PC-3 (cell line): ENCODE measurements at regions of chr17 and their contacts with region 1.

Region 1: DNA sequence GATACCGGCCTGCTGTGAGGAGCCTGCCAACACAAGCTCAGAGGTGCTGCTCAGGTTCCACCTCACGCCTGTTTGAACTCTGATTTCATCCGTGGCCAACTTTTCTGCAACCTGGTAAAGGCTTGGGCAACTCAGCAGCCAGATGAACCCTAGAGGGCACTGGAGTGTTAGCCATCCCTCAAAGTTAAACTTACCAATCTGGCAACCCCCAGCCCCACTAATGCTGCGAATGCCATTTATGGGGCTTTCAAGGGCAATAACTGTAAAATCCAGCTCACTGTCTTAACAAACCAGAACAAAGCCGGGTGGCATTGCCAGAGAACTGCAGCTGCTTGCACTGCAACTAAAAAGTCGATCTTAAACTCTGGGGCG is 105.5 kb downstream of the AXIN2 start:
- DNase-seq: peak; percentile 43
- ATAC-seq: peak; percentile 64
- H3K4me3 ChIP-seq: no peak overlapping the region
- H3K27ac ChIP-seq: no peak overlapping the region
- H3K4me1 ChIP-seq: no peaks in the 10 kb centered on the region
- H3K27me3 ChIP-seq: 0 out of 2 replicates have a peak, but pooled peaks cover 2% of the 10 kb centered on the region
- CTCF ChIP-seq: peak; percentile 59

Region 2: GRCh38 chr17:65294179-65294720 is 161.7 kb before region 1 on chr17:
- CTCF ChIA-PET with region 1: interaction called, 4 read pairs
- POLR2A ChIA-PET with region 1: no interaction called
- intact Hi-C with region 1: loop called (anchors 10 kb)
- DNase-seq: peak; percentile 83
- ATAC-seq: peak; percentile 98
- H3K4me3 ChIP-seq: no peak overlapping the region
- H3K27ac ChIP-seq: no peak overlapping the region
- H3K4me1 ChIP-seq: no peaks in the 10 kb centered on the region
- H3K27me3 ChIP-seq: no peaks in the 10 kb centered on the region
- CTCF ChIP-seq: peak; percentile 99

Region 3: GRCh38 chr17:65407017-65407416 is 48.9 kb before region 1 on chr17:
- CTCF ChIA-PET with region 1: no interaction called
- POLR2A ChIA-PET with region 1: no interaction called
- intact Hi-C with region 1: no loop called
- DNase-seq: no peak
- ATAC-seq: no peak
- H3K4me3 ChIP-seq: no peak overlapping the region
- H3K27ac ChIP-seq: no peak overlapping the region
- H3K4me1 ChIP-seq: peaks cover 10% of the 10 kb centered on the region
- H3K27me3 ChIP-seq: no peaks in the 10 kb centered on the region
- CTCF ChIP-seq: no peak